ENCODE measurements at regions of chr1 and their contacts with region 1.

Region 1: GRCh38 chr1:234983554-234984238 is 144.9 kb downstream of the TOMM20 start:
- DNase-seq: no peak
- H3K4me3 ChIP-seq: no peak overlapping the region
- H3K27ac ChIP-seq: peak overlapping the region; percentile 42 to 96
- H3K4me1 ChIP-seq: peaks cover 38 to 58% of the 10 kb centered on the region in 2 donors
- H3K27me3 ChIP-seq: no peaks in the 10 kb centered on the region
- CTCF ChIP-seq: no peak
- POLR2A ChIP-seq: no peak

Region 2: DNA sequence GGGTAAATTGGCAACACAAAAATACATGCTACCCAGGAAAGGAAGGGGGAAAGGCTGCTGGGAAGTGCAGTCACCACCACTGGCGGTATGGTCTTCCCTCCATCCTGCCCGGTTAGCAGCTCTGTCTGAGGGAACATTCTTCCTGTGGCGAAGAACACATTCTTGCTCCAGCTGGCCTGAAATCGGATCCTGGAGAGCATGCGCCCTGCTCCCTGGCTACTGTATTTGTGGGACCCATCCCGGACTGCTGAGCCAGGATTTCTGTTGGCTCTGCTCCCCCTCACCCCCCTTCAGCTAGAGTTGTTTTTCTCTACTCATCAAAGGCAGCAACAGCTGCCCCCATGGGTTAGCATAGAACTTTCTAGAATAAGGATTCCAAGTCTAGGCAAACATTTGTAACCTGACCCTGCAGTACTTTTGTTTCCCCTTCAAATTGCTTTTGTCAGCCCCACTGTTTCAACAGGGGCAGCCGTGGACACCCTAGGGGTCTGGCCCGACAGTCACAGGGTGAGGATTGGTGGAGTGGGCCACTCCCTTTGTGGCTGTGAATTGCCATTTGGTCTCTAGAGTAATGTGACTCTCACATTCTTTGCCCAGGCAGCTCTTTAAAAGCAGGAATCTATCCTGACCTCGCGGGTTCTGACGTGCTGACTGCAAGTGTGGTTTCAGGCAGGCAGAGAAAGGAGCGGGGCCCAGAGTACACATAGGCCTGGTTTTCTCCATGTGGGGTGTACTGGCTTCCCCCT is 12.8 kb before region 1 on chr1:
- intact Hi-C with region 1: no loop called
- DNase-seq: peak; percentile 64 to 84
- H3K4me3 ChIP-seq: peak overlapping the region in 2 of 3 donors; percentile 44 to 63
- H3K27ac ChIP-seq: peak overlapping the region; percentile 88 to 89
- H3K4me1 ChIP-seq: peaks cover 5 to 25% of the 10 kb centered on the region in 2 donors
- H3K27me3 ChIP-seq: no peaks in the 10 kb centered on the region
- CTCF ChIP-seq: no peak
- POLR2A ChIP-seq: no peak

Region 3: GRCh38 chr1:235022981-235023710 is 39.5 kb after region 1 on chr1:
- intact Hi-C with region 1: loop called (anchors 2 kb)
- DNase-seq: no peak
- H3K4me3 ChIP-seq: no peak overlapping the region
- H3K27ac ChIP-seq: no peak overlapping the region
- H3K4me1 ChIP-seq: no peaks in the 10 kb centered on the region
- H3K27me3 ChIP-seq: no peaks in the 10 kb centered on the region
- CTCF ChIP-seq: no peak
- POLR2A ChIP-seq: no peak

Region 4: DNA sequence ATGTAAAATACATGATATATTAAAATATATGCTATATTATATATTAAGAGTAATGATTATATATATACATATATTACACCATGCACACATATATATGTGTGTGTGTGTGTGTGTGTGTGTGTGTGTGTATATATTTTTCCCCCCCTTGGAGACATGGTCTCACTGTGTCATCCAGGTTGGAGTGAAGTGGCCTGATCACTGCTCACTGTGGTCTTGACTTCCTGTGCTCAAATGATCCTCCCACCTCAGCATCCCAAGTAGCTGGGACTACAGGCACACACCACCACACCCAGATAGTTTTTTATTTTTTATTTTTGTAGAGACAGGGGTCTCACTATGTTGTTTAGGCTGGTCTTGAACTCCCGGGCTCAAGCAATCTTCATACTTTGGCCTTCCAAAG is 231.8 kb after region 1 on chr1:
- intact Hi-C with region 1: no loop called
- DNase-seq: no peak
- H3K4me3 ChIP-seq: no peak overlapping the region
- H3K27ac ChIP-seq: no peak overlapping the region
- H3K4me1 ChIP-seq: no peaks in the 10 kb centered on the region
- H3K27me3 ChIP-seq: no peaks in the 10 kb centered on the region
- CTCF ChIP-seq: no peak
- POLR2A ChIP-seq: no peak

Measured in breast epithelium (tissue), 4 donors.